ENCODE measurements at regions of chr11 and their contacts with region 1.

Region 1: DNA sequence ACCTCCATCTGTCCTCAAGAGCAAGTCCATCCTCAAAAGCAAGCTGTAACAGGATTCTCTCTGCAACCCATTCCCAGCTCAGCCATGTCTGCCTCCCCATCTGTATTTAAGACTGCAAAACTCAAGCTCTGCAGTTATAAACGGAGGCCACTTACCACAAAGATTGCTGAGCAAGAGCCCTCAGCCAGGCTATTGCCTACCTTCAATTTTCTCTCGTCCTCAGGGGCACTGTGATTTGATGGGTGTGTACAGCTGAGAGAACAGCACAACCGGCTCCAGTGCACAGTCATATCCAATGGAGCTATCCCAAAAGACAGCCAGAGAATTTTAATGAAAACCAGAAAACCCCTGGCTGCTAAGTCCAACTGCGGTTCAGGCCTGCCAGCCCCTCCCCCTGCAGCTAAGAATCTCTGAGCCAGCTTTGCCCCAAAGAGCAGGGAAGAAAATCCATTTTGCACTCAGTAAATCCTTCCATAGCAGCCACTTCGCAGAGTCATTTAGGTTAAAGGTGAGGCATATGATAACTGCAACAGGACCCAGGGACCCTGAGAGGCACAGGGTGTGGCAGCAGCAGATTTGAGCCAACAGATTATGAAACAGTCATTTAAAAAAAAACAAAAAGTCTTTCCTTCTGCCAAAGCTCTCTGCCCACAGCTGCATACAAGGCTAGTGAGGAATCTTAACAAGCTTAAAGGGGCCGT is 37.6 kb downstream of the RAB30 start:
- DNase-seq: peak; percentile 77
- H3K4me3 Mint-ChIP-seq: peak overlapping the region; percentile 66
- H3K27ac Mint-ChIP-seq: peak overlapping the region; percentile 72
- H3K4me1 Mint-ChIP-seq: peaks cover 22% of the 10 kb centered on the region
- H3K27me3 Mint-ChIP-seq: no peaks in the 10 kb centered on the region
- CTCF ChIP-seq: no peak

Region 2: GRCh38 chr11:83044958-83045712 is 11.0 kb after region 1 on chr11:
- CTCF ChIA-PET with region 1: interaction called, 15 read pairs
- POLR2A ChIA-PET with region 1: interaction called, 73 read pairs
- intact Hi-C with region 1: no loop called
- DNase-seq: peak; percentile 85
- H3K4me3 Mint-ChIP-seq: no peak overlapping the region
- H3K27ac Mint-ChIP-seq: peak overlapping the region; percentile 69
- H3K4me1 Mint-ChIP-seq: peaks cover 34% of the 10 kb centered on the region
- H3K27me3 Mint-ChIP-seq: no peaks in the 10 kb centered on the region
- CTCF ChIP-seq: no peak

Region 3: GRCh38 chr11:83063073-83063754 is 29.1 kb after region 1 on chr11:
- CTCF ChIA-PET with region 1: interaction called, 3 read pairs
- POLR2A ChIA-PET with region 1: interaction called, 16 read pairs
- intact Hi-C with region 1: no loop called
- DNase-seq: peak; percentile 19
- H3K4me3 Mint-ChIP-seq: no peak overlapping the region
- H3K27ac Mint-ChIP-seq: peak overlapping the region; percentile 81
- H3K4me1 Mint-ChIP-seq: peaks cover 16% of the 10 kb centered on the region
- H3K27me3 Mint-ChIP-seq: no peaks in the 10 kb centered on the region
- CTCF ChIP-seq: no peak

Measured in MCF 10A (cell line).